Caco-2 (cell line): ENCODE measurements at regions of chr9 and their contacts with region 1.

Region 1: GRCh38 chr9:100598641-100599145 is 20.8 kb downstream of the CAVIN4 start:
- DNase-seq: peak; percentile 95
- H3K4me3 ChIP-seq: peak overlapping the region; percentile 52
- H3K4me3 Mint-ChIP-seq: peak overlapping the region; percentile 76
- H3K27ac Mint-ChIP-seq: peak overlapping the region; percentile 62
- H3K4me1 ChIP-seq: 0 out of 2 replicates have a peak, but pooled peaks cover 5% of the 10 kb centered on the region
- H3K4me1 Mint-ChIP-seq: peaks cover 20% of the 10 kb centered on the region
- H3K27me3 ChIP-seq: no peaks in the 10 kb centered on the region
- H3K27me3 Mint-ChIP-seq: no peaks in the 10 kb centered on the region
- CTCF ChIP-seq: no peak

Region 2: DNA sequence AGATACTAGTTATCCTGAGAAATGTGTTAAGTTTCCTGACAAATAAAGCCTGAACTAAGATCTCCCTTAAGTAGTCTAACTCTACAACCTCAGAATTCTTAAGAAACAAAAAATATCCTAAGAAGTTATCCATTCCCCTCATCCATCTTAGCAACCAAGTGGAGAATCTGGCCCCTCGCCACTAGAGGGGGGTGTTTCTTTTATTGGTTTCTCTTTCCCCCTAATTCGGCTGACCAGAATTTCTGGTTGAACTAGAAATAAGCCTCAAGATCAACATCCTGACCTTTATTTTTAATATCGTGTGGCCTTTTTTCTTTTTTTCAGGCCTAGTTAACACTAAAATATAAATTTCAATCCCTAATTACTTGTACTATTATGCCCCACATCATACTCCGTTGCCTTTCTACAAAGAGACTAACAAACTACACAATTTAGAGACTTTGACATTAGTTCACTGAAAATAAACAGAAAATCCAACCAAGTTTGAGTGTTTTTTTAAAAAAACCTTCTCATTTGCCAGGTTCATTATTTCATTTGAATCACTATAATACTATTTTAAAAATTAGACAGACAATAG is 791.3 kb before region 1 on chr9:
- CTCF ChIA-PET with region 1: no interaction called
- POLR2A ChIA-PET with region 1: no interaction called
- intact Hi-C with region 1: loop called (anchors 5 kb)
- DNase-seq: peak; percentile 55 to 83
- H3K4me3 ChIP-seq: no peak overlapping the region
- H3K4me3 Mint-ChIP-seq: no peak overlapping the region
- H3K27ac Mint-ChIP-seq: peak overlapping the region; percentile 15
- H3K4me1 ChIP-seq: no peaks in the 10 kb centered on the region; the same call in 1 of the 2 replicates
- H3K4me1 Mint-ChIP-seq: peaks cover 19% of the 10 kb centered on the region
- H3K27me3 ChIP-seq: no peaks in the 10 kb centered on the region
- H3K27me3 Mint-ChIP-seq: no peaks in the 10 kb centered on the region
- CTCF ChIP-seq: peak; percentile 79 to 81

Region 3: DNA sequence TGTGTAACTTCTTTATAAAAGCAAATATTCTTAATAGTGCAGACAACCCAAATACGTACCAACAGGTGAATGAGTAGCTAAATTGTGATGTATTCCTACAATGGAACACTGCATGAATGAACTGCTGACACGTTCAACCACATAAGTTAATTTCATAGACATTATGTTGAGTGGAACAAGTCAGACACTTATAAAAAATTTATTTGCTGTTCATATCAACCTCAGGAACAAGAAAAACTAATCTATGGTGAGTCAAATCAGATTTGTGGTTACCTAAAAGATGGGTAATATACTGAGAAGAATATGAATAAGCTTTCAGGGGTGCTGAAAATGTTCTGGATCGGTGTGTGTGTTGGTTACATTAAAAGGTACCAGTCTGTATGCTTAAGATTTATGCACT is 464.0 kb before region 1 on chr9:
- CTCF ChIA-PET with region 1: no interaction called
- POLR2A ChIA-PET with region 1: no interaction called
- intact Hi-C with region 1: loop called (anchors 5 kb)
- DNase-seq: no peak
- H3K4me3 ChIP-seq: no peak overlapping the region
- H3K4me3 Mint-ChIP-seq: no peak overlapping the region
- H3K27ac Mint-ChIP-seq: no peak overlapping the region
- H3K4me1 ChIP-seq: no peaks in the 10 kb centered on the region
- H3K4me1 Mint-ChIP-seq: no peaks in the 10 kb centered on the region
- H3K27me3 ChIP-seq: no peaks in the 10 kb centered on the region
- H3K27me3 Mint-ChIP-seq: no peaks in the 10 kb centered on the region
- CTCF ChIP-seq: no peak

Region 4: DNA sequence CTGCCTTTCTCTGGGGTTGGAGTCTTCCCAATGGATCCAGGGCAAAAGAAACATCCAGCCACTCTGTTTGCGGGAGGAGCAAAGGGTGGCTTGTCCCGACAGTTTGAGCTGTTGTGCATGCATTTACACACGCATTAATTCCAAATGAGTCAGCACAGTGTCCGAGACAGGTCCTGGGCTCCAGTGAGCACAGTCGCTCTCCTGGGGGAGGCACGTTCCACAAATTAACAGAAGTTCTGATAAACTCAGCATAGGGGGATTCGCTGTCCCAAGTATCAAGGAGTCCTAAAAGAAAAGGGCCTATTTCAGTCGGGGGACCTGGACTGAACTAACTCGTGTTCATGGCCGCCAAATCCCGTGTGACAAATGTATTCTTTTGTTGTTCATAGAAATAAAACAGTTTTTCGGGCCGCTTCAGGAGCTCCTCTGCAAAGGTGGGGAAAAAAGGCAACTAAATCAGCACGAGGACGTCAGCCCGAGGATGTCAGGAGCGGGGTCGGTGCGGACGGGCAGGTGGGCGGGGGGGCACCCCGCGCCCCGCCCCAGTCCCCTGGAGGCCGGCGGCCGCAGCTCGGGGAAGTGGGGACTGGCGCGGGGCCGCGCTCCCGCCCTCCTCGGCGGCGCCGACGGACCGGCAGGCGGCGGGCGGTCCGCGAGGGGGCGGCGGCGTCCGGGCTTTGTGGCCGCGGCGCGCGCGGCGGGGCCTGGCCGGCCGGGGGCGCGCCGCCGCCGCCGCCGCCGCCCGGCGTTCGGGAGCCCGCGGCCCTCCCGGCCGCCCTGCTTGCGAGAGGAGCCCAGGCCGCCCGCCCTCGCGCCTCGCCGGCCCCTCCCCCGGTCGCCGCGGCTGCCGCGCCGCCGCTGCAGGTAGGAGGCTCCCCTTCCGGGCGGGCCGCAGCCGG is 171.9 kb before region 1 on chr9 and contains the start of gene MSANTD3:
- CTCF ChIA-PET with region 1: interaction called, 4 read pairs
- POLR2A ChIA-PET with region 1: no interaction called
- intact Hi-C with region 1: loop called (anchors 1 kb)
- DNase-seq: peak; percentile 69 to 84
- H3K4me3 ChIP-seq: peak within 1 kb of the TSS; percentile 63
- H3K4me3 Mint-ChIP-seq: peak within 1 kb of the TSS; percentile 99
- H3K27ac Mint-ChIP-seq: peak within 1 kb of the TSS; percentile 99
- H3K4me1 ChIP-seq: peaks cover 20% of the 10 kb centered on the region
- H3K4me1 Mint-ChIP-seq: peaks cover 37% of the 10 kb centered on the region
- H3K27me3 ChIP-seq: no peaks in the 10 kb centered on the region
- H3K27me3 Mint-ChIP-seq: no peaks in the 10 kb centered on the region
- CTCF ChIP-seq: no peak
- total RNA-seq, gene MSANTD3: 25.9 and 27.7 TPM in 2 replicates

Region 5: DNA sequence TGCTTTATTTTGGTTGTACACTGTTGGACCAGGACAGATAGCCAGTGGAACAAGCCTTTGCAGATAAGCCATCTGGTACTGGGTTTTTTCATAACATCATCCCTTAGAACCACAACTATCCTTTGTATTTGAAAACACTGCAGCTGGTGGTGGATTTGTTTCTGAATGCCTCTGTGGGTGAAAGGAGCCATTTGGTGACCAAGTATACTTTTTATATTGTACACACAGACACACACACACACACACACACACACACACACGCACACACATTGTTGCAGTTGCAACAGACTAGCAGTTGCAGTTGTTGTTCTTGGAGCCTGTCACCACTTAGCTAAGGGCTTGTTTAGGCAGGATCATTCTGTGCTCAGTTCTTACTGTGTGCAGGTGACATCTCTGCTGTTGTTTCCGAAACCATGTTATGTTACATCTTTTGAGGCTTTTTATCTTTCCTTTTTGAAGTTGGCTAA is 43.7 kb before region 1 on chr9:
- CTCF ChIA-PET with region 1: no interaction called
- POLR2A ChIA-PET with region 1: no interaction called
- intact Hi-C with region 1: no loop called
- DNase-seq: no peak
- H3K4me3 ChIP-seq: no peak overlapping the region
- H3K4me3 Mint-ChIP-seq: no peak overlapping the region
- H3K27ac Mint-ChIP-seq: no peak overlapping the region
- H3K4me1 ChIP-seq: no peaks in the 10 kb centered on the region
- H3K4me1 Mint-ChIP-seq: no peaks in the 10 kb centered on the region
- H3K27me3 ChIP-seq: no peaks in the 10 kb centered on the region
- H3K27me3 Mint-ChIP-seq: no peaks in the 10 kb centered on the region
- CTCF ChIP-seq: no peak

Region 6: DNA sequence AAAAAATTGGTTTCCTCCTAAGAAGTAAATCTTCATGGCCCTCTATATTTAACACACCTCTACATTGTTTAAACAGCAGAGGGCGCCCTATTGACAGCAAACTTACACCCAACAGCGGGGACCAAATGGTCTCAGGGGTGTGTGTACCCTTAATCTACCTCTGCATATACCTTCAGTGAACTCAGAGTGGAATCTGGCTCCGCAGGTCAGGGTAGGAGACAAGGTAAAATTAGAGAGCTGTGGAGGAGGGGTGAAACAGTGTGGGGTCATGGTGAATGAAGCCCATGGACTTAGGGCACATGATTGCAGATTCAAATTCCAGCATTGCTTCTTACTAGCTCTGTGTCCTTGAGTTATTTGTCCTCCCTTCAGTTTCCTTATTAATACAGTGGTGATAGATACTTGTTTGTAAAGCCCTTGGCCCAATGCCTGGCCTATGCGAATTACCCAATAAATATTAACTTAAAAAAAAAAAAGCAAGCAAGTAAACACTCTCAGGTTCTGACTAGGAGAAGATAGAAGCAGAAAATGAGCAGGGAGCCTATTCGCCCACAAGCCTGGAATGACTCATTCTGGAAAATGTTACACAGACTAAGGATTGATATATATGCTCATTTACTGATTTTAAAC is 102.1 kb after region 1 on chr9:
- CTCF ChIA-PET with region 1: no interaction called
- POLR2A ChIA-PET with region 1: no interaction called
- intact Hi-C with region 1: loop called (anchors 5 kb)
- DNase-seq: peak in 1 of 2 experiments; percentile 43
- H3K4me3 ChIP-seq: no peak overlapping the region
- H3K4me3 Mint-ChIP-seq: no peak overlapping the region
- H3K27ac Mint-ChIP-seq: no peak overlapping the region
- H3K4me1 ChIP-seq: no peaks in the 10 kb centered on the region
- H3K4me1 Mint-ChIP-seq: no peaks in the 10 kb centered on the region
- H3K27me3 ChIP-seq: no peaks in the 10 kb centered on the region
- H3K27me3 Mint-ChIP-seq: no peaks in the 10 kb centered on the region
- CTCF ChIP-seq: peak; percentile 39 to 53

Region 7: DNA sequence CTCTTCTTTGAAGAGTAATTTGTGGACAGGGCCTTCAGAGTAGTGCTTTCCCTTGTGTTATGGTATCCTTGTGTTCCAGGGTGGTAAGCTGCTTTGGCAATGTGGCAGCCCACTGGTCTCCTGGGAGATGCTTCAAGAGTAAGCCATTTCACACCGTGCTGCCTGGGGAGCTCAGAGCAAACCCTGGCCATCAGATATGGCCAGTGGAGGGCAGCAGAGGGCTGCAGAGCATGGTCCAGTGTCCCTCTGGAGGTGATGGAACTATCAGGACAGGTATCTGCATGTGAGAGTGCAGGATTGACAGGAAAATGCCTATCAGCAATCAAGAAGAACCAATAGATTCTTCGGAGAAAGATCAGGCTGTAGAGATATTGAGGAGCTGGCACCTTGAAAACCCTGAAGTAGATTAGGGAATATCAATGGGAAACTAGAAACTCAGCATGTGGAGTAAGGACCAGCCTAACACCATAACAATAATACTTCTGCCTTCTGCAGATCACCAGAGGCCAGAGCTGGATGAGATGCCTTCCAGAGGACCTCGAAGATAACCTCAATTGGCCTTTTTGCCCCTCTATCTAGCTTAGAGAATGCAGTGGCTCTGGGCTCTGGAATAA is 520.6 kb after region 1 on chr9:
- CTCF ChIA-PET with region 1: interaction called, 5 read pairs
- POLR2A ChIA-PET with region 1: no interaction called
- intact Hi-C with region 1: loop called (anchors 1 kb)
- DNase-seq: peak; percentile 71 to 79
- H3K4me3 ChIP-seq: no peak overlapping the region
- H3K4me3 Mint-ChIP-seq: no peak overlapping the region
- H3K27ac Mint-ChIP-seq: no peak overlapping the region
- H3K4me1 ChIP-seq: no peaks in the 10 kb centered on the region
- H3K4me1 Mint-ChIP-seq: no peaks in the 10 kb centered on the region
- H3K27me3 ChIP-seq: no peaks in the 10 kb centered on the region
- H3K27me3 Mint-ChIP-seq: no peaks in the 10 kb centered on the region
- CTCF ChIP-seq: peak; percentile 81 to 92

Region 8: GRCh38 chr9:101458955-101459631 is 860.4 kb after region 1 on chr9:
- CTCF ChIA-PET with region 1: no interaction called
- POLR2A ChIA-PET with region 1: no interaction called
- intact Hi-C with region 1: loop called (anchors 2 kb)
- DNase-seq: peak; percentile 37 to 56
- H3K4me3 ChIP-seq: no peak overlapping the region
- H3K4me3 Mint-ChIP-seq: no peak overlapping the region
- H3K27ac Mint-ChIP-seq: no peak overlapping the region
- H3K4me1 ChIP-seq: peaks cover 2% of the 10 kb centered on the region; the same call in 1 of the 2 replicates
- H3K4me1 Mint-ChIP-seq: peaks cover 6% of the 10 kb centered on the region
- H3K27me3 ChIP-seq: no peaks in the 10 kb centered on the region
- H3K27me3 Mint-ChIP-seq: no peaks in the 10 kb centered on the region
- CTCF ChIP-seq: peak; percentile 52 to 69